Activated T-helper 1 cell treated with anti-CD3 and anti-CD28 coated beads, Interleukin-12 subunit alpha, Interleukin-12 subunit beta, Interleukin-2, Interleukin-4 antibody, amounts not matched to agents 30 ng/mL and 10 ng/mL and 1 ng/mL, durations not matched to agents 14 hours and 24 hours and 36 hours (primary cell): ENCODE measurements at regions of chr3 and their contacts with region 1.

Region 1: DNA sequence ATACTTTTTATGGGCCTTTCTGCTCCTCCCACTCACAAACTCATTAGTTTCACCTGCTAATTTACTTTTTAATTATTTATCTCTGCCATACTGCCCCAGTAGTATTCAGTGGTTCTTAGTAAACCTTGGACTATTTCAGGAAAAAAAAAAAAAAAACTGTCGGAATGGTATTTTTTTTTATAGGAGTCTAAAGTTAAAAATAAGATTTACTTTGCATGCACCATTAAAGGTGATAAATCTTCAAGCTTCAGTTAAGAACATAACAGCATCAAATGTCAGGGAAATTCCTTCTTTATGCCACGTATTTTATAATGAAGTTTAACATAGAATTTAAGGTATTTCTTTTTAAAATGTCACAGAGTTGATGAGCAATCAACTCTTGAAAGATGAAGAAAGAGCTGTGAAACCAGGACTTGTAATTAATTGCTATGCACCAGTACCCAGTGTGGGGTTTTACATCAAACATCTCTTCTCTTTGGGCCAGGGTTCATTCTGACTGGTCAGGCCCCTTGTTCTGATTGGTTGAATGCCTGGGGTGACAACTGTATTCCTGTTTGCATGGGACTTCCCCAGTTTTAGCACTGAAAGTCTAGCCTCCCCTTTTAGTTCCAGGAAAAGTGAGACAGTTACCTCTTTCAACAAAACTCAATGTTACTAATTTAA is 40.3 kb upstream of the PTPRG start:
- DNase-seq: peak; percentile 61
- H3K4me3 Mint-ChIP-seq: peak overlapping the region; percentile 57
- H3K27ac Mint-ChIP-seq: peak overlapping the region; percentile 78
- H3K4me1 Mint-ChIP-seq: peaks cover 57% of the 10 kb centered on the region
- H3K27me3 Mint-ChIP-seq: no peaks in the 10 kb centered on the region

Region 2: GRCh38 chr3:60010781-60011180 is 1510.3 kb before region 1 on chr3:
- intact Hi-C with region 1: loop called (anchors 10 kb)
- DNase-seq: peak; percentile 73
- H3K4me3 Mint-ChIP-seq: peak overlapping the region; percentile 74
- H3K27ac Mint-ChIP-seq: peak overlapping the region; percentile 91
- H3K4me1 Mint-ChIP-seq: peaks cover 76% of the 10 kb centered on the region
- H3K27me3 Mint-ChIP-seq: peaks cover 2% of the 10 kb centered on the region

Region 3: DNA sequence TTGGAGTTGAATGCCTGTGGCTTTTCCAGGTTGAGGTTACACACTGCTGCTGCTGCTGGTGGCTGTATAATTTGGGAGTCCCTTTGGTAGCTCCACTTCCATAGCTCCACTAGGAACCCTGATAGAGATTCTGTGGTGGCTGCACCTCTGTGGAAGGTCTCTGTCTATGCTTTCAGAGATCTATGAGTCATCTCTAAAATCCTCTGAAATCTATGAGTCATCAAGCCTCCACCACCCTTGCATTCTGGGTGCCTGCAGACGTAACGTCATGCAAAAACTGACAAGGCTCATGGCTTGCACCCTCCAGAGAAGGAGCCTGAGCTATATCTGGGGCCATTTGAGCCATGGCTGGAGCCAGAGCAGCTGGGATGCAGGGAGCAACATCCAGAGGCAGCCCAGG is 1434.3 kb before region 1 on chr3:
- intact Hi-C with region 1: loop called (anchors 10 kb)
- DNase-seq: peak; percentile 54
- H3K4me3 Mint-ChIP-seq: peak overlapping the region; percentile 53
- H3K27ac Mint-ChIP-seq: peak overlapping the region; percentile 96
- H3K4me1 Mint-ChIP-seq: peaks cover 69% of the 10 kb centered on the region
- H3K27me3 Mint-ChIP-seq: no peaks in the 10 kb centered on the region

Region 4: GRCh38 chr3:60555684-60556354 is 965.3 kb before region 1 on chr3:
- intact Hi-C with region 1: loop called (anchors 10 kb)
- DNase-seq: no peak
- H3K4me3 Mint-ChIP-seq: no peak overlapping the region
- H3K27ac Mint-ChIP-seq: peak overlapping the region; percentile 0
- H3K4me1 Mint-ChIP-seq: peaks cover 38% of the 10 kb centered on the region
- H3K27me3 Mint-ChIP-seq: peaks cover 2% of the 10 kb centered on the region

Region 5: DNA sequence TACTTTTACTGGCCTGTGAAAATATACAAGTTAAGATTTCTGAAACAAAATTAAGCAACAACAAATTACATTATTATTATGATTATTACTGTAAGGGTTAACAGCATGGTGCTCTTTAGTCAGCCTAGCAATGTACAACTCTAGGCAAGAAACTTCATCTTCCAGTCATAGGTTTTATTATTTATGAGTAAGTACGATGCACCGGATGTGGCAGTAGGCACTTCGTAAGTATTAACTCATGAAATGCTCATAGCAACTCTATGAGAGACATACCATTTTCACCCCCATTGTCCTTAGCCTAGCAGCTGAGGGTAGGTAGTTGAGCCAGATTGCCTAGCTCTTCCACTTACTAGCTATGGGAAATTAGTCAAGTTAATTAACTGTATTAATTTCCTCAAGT is 27.8 kb before region 1 on chr3:
- intact Hi-C with region 1: no loop called
- DNase-seq: no peak
- H3K4me3 Mint-ChIP-seq: no peak overlapping the region
- H3K27ac Mint-ChIP-seq: no peak overlapping the region
- H3K4me1 Mint-ChIP-seq: no peaks in the 10 kb centered on the region
- H3K27me3 Mint-ChIP-seq: peaks cover 3% of the 10 kb centered on the region

Region 6: DNA sequence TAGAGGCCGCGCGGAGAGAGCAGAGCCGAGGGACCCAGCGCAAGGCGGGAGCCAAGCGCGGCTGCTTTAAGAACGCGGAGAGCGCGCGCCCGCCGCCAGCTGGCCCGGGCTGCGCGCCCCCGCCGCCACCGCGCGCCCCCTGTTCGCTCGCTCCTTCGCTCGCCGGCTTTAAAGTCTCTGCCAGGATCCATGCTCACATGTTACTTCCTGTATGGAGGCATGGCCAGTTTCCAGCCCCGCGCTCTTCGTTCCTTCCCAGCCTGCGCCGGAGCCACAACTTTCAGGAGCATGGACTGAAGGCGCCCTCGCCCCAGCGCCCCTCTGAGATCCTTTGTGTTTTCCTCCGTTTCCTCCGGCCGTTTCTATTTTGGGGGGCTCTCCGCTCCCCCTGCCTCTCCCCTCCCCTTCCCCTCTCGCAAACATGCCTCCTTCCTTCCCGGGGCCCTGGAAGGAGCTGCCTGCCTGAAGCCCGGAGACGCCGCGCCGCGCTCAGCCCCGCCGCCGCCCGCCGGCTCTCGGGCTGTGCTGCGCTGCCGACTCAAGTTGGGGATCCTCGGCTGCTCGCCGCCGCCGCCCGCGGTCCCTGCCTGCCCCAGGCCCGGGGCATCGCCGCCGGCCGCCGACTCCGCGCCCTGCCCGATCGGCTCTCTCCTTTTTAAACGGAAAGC is 40.4 kb after region 1 on chr3 and contains the start of gene PTPRG:
- intact Hi-C with region 1: loop called (anchors 1 kb)
- DNase-seq: peak; percentile 37
- H3K4me3 Mint-ChIP-seq: peak within 1 kb of the TSS; percentile 93
- H3K27ac Mint-ChIP-seq: peak within 1 kb of the TSS; percentile 74
- H3K4me1 Mint-ChIP-seq: peaks cover 12% of the 10 kb centered on the region
- H3K27me3 Mint-ChIP-seq: peaks cover 57% of the 10 kb centered on the region
- total RNA-seq, gene PTPRG: 3.7 and 4.4 TPM in 2 replicates